ENCODE measurements at regions of chr16 and their contacts with region 1.

Region 1: DNA sequence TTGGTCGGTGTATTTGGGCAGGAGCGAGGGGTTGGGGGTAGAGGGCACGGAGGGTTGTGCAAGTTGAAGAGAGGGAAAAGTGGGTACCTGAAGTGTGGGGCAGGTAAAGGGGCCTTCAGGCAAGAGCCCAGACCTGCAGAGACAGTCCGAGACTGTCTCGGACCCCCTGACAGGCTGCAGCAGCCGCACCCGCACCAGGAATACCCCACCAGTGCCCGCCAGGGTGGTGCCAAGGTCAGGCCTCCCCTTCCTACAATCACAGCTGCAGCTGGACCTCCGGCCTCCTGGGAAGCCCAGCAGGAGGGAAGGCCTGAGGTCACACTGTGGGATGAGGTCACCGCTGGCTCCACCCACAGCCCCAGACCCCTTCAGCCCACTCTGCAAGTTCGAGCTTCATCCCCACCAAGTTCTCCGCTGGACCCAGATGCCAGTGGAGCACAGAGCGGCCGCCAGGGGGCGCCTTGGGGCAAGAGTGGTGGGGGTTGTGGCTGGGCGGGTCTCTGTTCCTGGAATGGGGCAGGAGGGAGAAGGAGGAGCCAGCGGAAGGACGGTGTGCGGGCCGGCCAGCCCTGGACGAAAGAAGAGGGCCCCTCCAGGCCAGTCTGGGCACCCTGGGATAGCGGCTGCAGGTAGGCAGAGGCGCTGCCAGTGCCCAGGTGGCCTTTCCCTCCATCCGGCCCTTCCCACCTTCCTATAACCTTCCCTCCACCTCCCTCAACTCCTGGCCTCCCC is at the start of gene HSD3B7:
- DNase-seq: peak; percentile 80 to 95
- ATAC-seq: peak; percentile 75 to 92
- H3K4me3 ChIP-seq: peak within 1 kb of the TSS; percentile 46
- H3K27ac ChIP-seq: peak within 1 kb of the TSS; percentile 84 to 88
- H3K4me1 ChIP-seq: peaks cover 13% of the 10 kb centered on the region
- CTCF ChIP-seq: peak; percentile 86
- EP300 ChIP-seq: no peak
- POLR2A ChIP-seq: peak; percentile 21; the same call in 1 of the 2 replicates
- RAD21 ChIP-seq: peak; percentile 86 to 90
- polyA plus RNA-seq, gene HSD3B7: 10.5 and 15.2 TPM in 2 replicates

Region 2: DNA sequence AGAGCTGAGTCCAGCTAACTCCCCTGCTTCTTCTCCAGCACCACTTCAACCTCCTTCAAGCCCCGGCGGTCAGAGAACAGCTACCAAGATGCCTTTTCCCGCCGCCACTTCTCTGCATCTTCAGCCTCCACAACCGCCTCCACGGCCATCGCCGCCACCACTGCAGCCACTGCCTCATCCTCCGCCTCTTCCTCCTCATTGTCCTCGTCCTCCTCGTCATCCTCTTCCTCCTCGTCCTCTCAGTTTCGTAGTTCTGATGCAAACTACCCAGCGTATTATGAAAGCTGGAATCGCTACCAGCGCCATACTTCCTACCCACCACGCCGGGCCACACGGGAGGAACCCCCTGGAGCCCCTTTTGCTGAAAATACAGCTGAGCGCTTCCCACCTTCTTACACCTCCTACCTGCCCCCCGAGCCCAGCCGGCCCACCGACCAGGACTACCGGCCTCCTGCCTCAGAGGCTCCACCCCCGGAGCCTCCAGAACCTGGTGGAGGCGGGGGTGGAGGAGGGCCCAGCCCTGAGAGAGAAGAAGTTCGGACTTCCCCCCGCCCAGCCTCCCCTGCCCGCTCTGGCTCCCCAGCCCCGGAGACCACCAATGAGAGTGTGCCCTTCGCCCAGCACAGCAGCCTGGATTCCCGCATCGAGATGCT is 20.1 kb before region 1 on chr16:
- CTCF ChIA-PET with region 1: interaction called, 75 read pairs
- POLR2A ChIA-PET with region 1: no interaction called
- DNase-seq: no peak
- ATAC-seq: no peak
- H3K4me3 ChIP-seq: no peak overlapping the region
- H3K27ac ChIP-seq: no peak overlapping the region
- H3K4me1 ChIP-seq: no peaks in the 10 kb centered on the region
- CTCF ChIP-seq: no peak
- EP300 ChIP-seq: no peak
- POLR2A ChIP-seq: no peak
- RAD21 ChIP-seq: no peak

Region 3: GRCh38 chr16:31010585-31011325 is 25.9 kb after region 1 on chr16 and contains the start of gene STX1B:
- CTCF ChIA-PET with region 1: interaction called, 28 read pairs
- POLR2A ChIA-PET with region 1: no interaction called
- DNase-seq: no peak
- ATAC-seq: no peak
- H3K4me3 ChIP-seq: no peak within 1 kb of the TSS
- H3K27ac ChIP-seq: peak within 1 kb of the TSS in 1 of 2 experiments; percentile 77; a peak in 3 of 6 replicates
- H3K4me1 ChIP-seq: peaks cover 5% of the 10 kb centered on the region; the same call in 1 of the 3 replicates
- CTCF ChIP-seq: no peak
- EP300 ChIP-seq: no peak
- POLR2A ChIP-seq: no peak
- RAD21 ChIP-seq: no peak
- polyA plus RNA-seq, gene STX1B: 2.6 and 2.7 TPM in 2 replicates

Region 4: DNA sequence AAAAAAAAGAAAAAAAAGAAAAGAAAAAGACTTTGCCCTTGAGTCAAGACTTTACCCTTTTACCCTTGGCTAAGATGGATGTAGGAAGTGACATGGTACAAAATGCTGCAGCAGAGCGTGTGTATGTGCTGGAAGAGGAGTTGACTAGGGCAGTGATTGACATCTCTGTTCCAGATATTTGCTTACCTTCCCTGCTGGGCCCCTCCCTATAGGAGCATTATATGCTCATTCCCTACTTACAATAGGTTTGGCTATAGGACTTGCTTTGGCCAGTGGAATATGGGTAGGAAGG is 59.3 kb after region 1 on chr16:
- CTCF ChIA-PET with region 1: interaction called, 49 read pairs
- POLR2A ChIA-PET with region 1: no interaction called
- DNase-seq: no peak
- ATAC-seq: no peak
- H3K4me3 ChIP-seq: no peak overlapping the region
- H3K27ac ChIP-seq: no peak overlapping the region
- H3K4me1 ChIP-seq: no peaks in the 10 kb centered on the region
- CTCF ChIP-seq: no peak
- EP300 ChIP-seq: no peak
- POLR2A ChIP-seq: no peak
- RAD21 ChIP-seq: no peak

Region 5: GRCh38 chr16:31073968-31074813 is 89.4 kb after region 1 on chr16 and contains the starts of genes ZNF646 and ZNF668:
- CTCF ChIA-PET with region 1: interaction called, 58 read pairs
- POLR2A ChIA-PET with region 1: interaction called, 6 read pairs
- DNase-seq: peak; percentile 99 to 100
- ATAC-seq: peak; percentile 91 to 92
- H3K4me3 ChIP-seq: peak within 1 kb of the TSS; percentile 90
- H3K27ac ChIP-seq: peak within 1 kb of the TSS; percentile 98
- H3K4me1 ChIP-seq: peaks cover 19% of the 10 kb centered on the region
- CTCF ChIP-seq: no peak
- EP300 ChIP-seq: no peak
- POLR2A ChIP-seq: peak; percentile 69
- RAD21 ChIP-seq: no peak
- polyA plus RNA-seq, gene ZNF646: 3.0 and 4.3 TPM in 2 replicates
- polyA plus RNA-seq, gene ZNF668: 3.9 and 4.7 TPM in 2 replicates

Region 6: GRCh38 chr16:31108035-31108793 is 123.4 kb after region 1 on chr16 and contains the start of gene BCKDK:
- CTCF ChIA-PET with region 1: interaction called, 12 read pairs
- POLR2A ChIA-PET with region 1: no interaction called
- DNase-seq: peak; percentile 69 to 75
- ATAC-seq: peak; percentile 92 to 95
- H3K4me3 ChIP-seq: peak within 1 kb of the TSS; percentile 97
- H3K27ac ChIP-seq: peak within 1 kb of the TSS; percentile 97 to 99
- H3K4me1 ChIP-seq: peaks cover 15% of the 10 kb centered on the region
- CTCF ChIP-seq: no peak
- EP300 ChIP-seq: 0 out of 5 replicates have a peak, but pooled peaks of 1 of the 2 experiments have one; percentile 12
- POLR2A ChIP-seq: peak; percentile 62
- RAD21 ChIP-seq: no peak
- polyA plus RNA-seq, gene BCKDK: 20.7 and 22.1 TPM in 2 replicates

Measured in A549 (cell line).